Transverse colon (tissue), 4 donors: ENCODE measurements at regions of chr12 and their contacts with region 1.

Region 1: GRCh38 chr12:50400598-50401364 is at the start of gene LARP4:
- DNase-seq: peak; percentile 94
- H3K4me3 ChIP-seq: peak within 1 kb of the TSS; percentile 50 to 68 (median 63)
- H3K27ac ChIP-seq: peak within 1 kb of the TSS; percentile 93 to 95 (median 94)
- H3K4me1 ChIP-seq: peaks cover 6 to 33% (median 13%) of the 10 kb centered on the region in 4 donors
- H3K27me3 ChIP-seq: peaks cover 5% of the 10 kb centered on the region
- CTCF ChIP-seq: peak in 1 of 5 experiments; percentile 7
- EP300 ChIP-seq: no peak
- POLR2A ChIP-seq: peak; percentile 93
- total RNA-seq, gene LARP4: 13.5 to 58.1 (median 39.6) TPM

Region 2: DNA sequence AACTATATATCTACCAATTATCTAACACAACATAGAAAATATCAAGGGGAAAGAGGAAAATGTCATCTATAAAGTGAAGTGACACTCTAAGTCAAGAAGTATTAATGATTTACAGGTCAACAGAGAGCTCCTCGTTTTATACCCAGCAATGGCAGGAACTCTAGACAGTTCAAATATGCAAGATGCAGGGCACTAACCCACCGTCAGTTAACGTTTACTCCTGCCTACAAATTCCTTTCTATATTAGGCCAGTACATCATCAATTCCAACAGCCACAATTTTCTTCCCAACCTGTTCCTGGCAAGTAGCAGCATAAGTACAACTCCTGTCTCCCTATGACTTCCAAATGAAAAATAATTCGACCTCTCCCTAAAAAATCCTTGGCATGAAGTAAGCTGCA is 1709.8 kb before region 1 on chr12:
- in situ Hi-C with region 1: no loop called
- intact Hi-C with region 1: loop called (anchors 5 kb)
- DNase-seq: no peak
- H3K4me3 ChIP-seq: no peak overlapping the region
- H3K27ac ChIP-seq: no peak overlapping the region
- H3K4me1 ChIP-seq: peaks cover 0 to 3% (median 0%) of the 10 kb centered on the region in 4 donors
- H3K27me3 ChIP-seq: no peaks in the 10 kb centered on the region
- CTCF ChIP-seq: no peak
- EP300 ChIP-seq: no peak
- POLR2A ChIP-seq: no peak

Region 3: DNA sequence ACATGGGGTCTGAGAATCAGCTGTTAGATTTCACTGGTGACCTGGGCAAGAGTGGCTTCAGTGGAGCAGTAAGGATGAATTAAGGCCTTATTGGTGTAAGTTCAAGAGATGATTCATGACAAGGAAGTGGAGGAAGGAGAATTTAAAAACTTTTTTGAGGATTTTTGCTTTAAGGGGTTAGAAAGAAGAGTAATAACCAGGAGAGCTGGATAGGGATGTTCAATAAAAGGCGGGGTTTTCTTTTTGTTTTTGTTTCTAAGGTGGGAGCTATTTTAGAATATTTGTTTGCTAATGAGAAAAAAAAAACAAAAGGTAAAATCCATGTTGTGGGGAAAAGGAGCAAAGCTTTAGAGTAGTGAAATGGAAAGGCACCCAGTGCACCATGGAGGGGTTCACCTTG is 1254.4 kb before region 1 on chr12:
- in situ Hi-C with region 1: no loop called
- intact Hi-C with region 1: loop called (anchors 10 kb)
- DNase-seq: no peak
- H3K4me3 ChIP-seq: no peak overlapping the region
- H3K27ac ChIP-seq: no peak overlapping the region
- H3K4me1 ChIP-seq: no peaks in the 10 kb centered on the region
- H3K27me3 ChIP-seq: no peaks in the 10 kb centered on the region
- CTCF ChIP-seq: no peak
- EP300 ChIP-seq: no peak
- POLR2A ChIP-seq: no peak